ENCODE measurements at regions of chr20 and their contacts with region 1.

Region 1: GRCh38 chr20:40293740-40294139 is 395.3 kb downstream of the MAFB start:
- DNase-seq: no peak
- H3K4me3 Mint-ChIP-seq: no peak overlapping the region
- H3K27ac Mint-ChIP-seq: no peak overlapping the region
- H3K4me1 Mint-ChIP-seq: no peaks in the 10 kb centered on the region
- H3K27me3 Mint-ChIP-seq: peaks cover 36% of the 10 kb centered on the region
- CTCF ChIP-seq: no peak

Region 2: GRCh38 chr20:38321959-38322598 is 1971.7 kb before region 1 on chr20:
- CTCF ChIA-PET with region 1: no interaction called
- intact Hi-C with region 1: no loop called
- DNase-seq: peak; percentile 76
- H3K4me3 Mint-ChIP-seq: no peak overlapping the region
- H3K27ac Mint-ChIP-seq: no peak overlapping the region
- H3K4me1 Mint-ChIP-seq: peaks cover 17% of the 10 kb centered on the region
- H3K27me3 Mint-ChIP-seq: peaks cover 75% of the 10 kb centered on the region
- CTCF ChIP-seq: peak; percentile 71

Region 3: DNA sequence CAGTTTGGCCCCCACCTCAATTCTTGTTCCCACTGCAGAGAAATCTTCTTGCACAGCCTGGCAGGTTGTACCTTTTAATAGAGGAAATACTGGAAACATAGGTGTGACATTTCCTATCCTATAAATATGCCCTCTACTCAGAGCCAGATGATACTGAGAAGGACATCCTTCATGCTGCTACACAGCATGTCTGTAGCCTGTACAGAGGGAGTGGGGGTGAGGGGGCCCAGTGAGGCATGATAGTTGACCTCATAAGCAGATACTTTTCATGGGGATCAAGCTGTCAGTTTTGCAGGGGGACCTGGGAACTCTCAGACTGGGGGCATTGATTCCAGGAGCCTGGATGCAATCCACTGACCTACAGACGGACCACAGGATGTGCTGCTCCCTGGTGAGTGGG is 638.7 kb after region 1 on chr20:
- CTCF ChIA-PET with region 1: interaction called, 10 read pairs
- intact Hi-C with region 1: no loop called
- DNase-seq: no peak
- H3K4me3 Mint-ChIP-seq: no peak overlapping the region
- H3K27ac Mint-ChIP-seq: no peak overlapping the region
- H3K4me1 Mint-ChIP-seq: no peaks in the 10 kb centered on the region
- H3K27me3 Mint-ChIP-seq: peaks cover 63% of the 10 kb centered on the region
- CTCF ChIP-seq: no peak

Measured in Calu3 (cell line).